ENCODE measurements at regions of chr5 and their contacts with region 1.

Region 1: DNA sequence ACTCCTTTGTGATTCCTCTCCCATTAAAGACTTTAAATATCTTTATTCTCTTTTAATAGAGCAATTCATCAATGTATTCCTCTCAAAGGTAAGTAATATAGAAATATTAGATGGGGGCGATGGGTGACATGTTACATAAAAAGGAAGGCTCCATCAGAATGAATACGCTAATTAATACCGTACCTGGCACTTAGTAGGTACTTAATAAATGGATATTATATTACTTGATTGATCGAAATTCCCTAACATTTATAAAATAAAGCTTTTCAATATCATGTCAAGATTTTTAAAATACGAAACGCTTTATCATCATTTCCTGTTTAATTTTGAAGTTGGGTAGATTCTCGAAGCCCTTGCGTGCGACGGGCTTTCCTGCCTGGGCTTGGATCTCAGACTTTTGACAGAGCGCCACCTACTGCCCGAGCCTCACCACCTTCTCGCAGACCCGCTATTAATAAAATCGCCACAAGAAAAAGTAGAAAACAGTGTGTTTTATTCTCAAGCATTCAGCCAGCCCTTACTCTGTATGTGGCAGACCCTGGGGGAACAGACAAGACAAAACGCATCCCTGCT is 99.4 kb downstream of the C5orf15 start:
- DNase-seq: no peak
- H3K4me3 ChIP-seq: peak overlapping the region in 1 of 4 donors; percentile 22
- H3K27ac ChIP-seq: no peak overlapping the region
- H3K4me1 ChIP-seq: peaks cover 3 to 18% (median 10%) of the 10 kb centered on the region in 4 donors
- H3K27me3 ChIP-seq: no peaks in the 10 kb centered on the region
- CTCF ChIP-seq: peak; percentile 63 to 77 (median 71)
- EP300 ChIP-seq: no peak
- POLR2A ChIP-seq: no peak

Region 2: GRCh38 chr5:133119233-133119711 is 749.8 kb before region 1 on chr5:
- intact Hi-C with region 1: loop called (anchors 5 kb)
- DNase-seq: no peak
- H3K4me3 ChIP-seq: no peak overlapping the region
- H3K27ac ChIP-seq: no peak overlapping the region
- H3K4me1 ChIP-seq: peaks cover 0 to 6% (median 0%) of the 10 kb centered on the region in 4 donors
- H3K27me3 ChIP-seq: no peaks in the 10 kb centered on the region
- CTCF ChIP-seq: no peak
- EP300 ChIP-seq: no peak
- POLR2A ChIP-seq: no peak

Region 3: GRCh38 chr5:133193794-133194193 is 675.2 kb before region 1 on chr5:
- intact Hi-C with region 1: no loop called
- DNase-seq: no peak
- H3K4me3 ChIP-seq: no peak overlapping the region
- H3K27ac ChIP-seq: no peak overlapping the region
- H3K4me1 ChIP-seq: no peaks in the 10 kb centered on the region
- H3K27me3 ChIP-seq: peaks cover 0 to 25% (median 0%) of the 10 kb centered on the region in 4 donors
- CTCF ChIP-seq: no peak
- EP300 ChIP-seq: no peak
- POLR2A ChIP-seq: no peak

Region 4: DNA sequence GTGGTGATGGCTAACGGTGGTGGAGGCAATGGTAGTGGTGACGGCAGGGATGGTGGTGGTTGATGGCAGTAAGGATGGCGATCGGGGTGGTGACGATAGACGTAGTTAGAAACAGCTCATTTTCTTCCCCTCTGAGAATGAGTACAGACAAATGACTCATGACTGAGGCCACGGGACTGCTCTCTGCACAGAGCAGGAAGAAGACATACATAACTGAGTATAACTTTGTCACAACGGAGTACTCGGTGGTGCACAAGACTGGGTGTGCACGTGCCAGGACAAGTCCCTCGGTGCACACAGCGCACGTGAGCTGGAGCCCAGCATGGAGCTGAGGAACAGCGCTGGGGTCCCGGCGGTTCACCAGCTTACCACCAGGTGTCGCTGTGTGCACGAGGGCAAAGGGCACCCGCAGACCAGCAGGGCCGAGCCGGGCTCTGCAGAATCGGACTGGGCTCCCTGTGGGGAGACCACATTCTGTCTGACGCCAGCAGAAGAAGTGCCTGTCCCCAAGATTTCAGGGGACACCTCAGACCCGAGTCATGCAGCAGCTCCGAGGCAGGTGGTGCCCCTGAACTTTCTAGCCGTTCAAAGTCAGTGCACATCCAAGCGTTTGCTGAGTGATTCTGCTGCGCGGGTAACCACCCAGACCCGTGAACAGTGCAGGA is 445.3 kb before region 1 on chr5:
- intact Hi-C with region 1: loop called (anchors 5 kb)
- DNase-seq: peak; percentile 91
- H3K4me3 ChIP-seq: no peak overlapping the region
- H3K27ac ChIP-seq: no peak overlapping the region
- H3K4me1 ChIP-seq: peaks cover 0 to 5% (median 0%) of the 10 kb centered on the region in 4 donors
- H3K27me3 ChIP-seq: peaks cover 0 to 11% (median 0%) of the 10 kb centered on the region in 4 donors
- CTCF ChIP-seq: peak; percentile 65 to 89 (median 83)
- EP300 ChIP-seq: no peak
- POLR2A ChIP-seq: no peak